ENCODE measurements at regions of chr17 and their contacts with region 1.

Region 1: GRCh38 chr17:38428112-38428642 is at the start of gene ARHGAP23:
- DNase-seq: peak; percentile 85
- ATAC-seq: peak; percentile 73
- total RNA-seq, gene ARHGAP23: 67.5 TPM

Region 2: GRCh38 chr17:38444151-38444550 is 16.0 kb after region 1 on chr17:
- intact Hi-C with region 1: loop called (anchors 2 kb)
- DNase-seq: no peak
- ATAC-seq: peak; percentile 56

Region 3: DNA sequence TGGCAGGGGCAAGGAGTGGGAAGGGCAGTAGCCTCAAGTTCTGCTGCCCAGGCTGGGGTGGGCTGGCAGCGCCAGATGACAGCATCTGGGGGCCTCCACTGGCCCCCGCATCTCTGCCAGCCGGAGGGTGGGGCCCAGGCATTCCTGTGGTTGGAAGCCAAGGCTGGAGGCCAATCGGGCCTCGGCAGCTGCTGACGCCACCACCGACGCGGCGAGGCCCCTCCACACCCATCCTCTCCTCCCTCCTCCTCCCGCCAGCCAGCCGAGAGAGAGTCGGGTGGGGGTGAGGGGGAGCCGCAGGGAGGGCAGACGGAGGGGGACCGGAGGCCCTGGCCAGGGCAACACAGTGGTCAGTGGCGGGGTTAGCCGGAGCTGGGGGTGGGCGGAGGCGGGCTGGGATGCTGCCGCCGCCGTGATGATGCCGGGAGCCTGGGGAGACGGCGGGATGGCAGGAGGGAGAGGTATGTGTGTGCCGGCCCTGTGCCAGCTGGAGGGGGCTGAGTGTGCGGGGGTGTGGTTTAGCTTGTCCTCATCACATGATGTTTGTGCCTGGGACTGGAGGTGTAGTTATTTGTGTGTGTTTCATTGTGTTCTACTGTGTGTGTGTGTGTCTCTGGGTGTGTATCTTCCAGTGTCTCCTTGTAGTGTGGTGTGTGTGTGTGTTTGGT is 36.7 kb after region 1 on chr17:
- intact Hi-C with region 1: loop called (anchors 5 kb)
- DNase-seq: peak; percentile 91
- ATAC-seq: peak; percentile 83

Region 4: GRCh38 chr17:38485146-38485468 is 56.9 kb after region 1 on chr17:
- intact Hi-C with region 1: loop called (anchors 5 kb)
- DNase-seq: no peak
- ATAC-seq: no peak